Activated naive CD8-positive, alpha-beta T cell treated with anti-CD3 and anti-CD28 coated beads, Interleukin-2, amount 10 ng/mL, durations not matched to agents 7 days and 5 days (primary cell): ENCODE measurements at regions of chr5 and their contacts with region 1.

Region 1: GRCh38 chr5:154038707-154039457 is at the starts of genes FAM114A2 and MFAP3:
- DNase-seq: peak; percentile 87
- ATAC-seq: peak; percentile 99
- H3K4me3 Mint-ChIP-seq: peak within 1 kb of the TSS; percentile 92
- H3K27ac Mint-ChIP-seq: peak within 1 kb of the TSS; percentile 96
- H3K4me1 Mint-ChIP-seq: peaks cover 36% of the 10 kb centered on the region
- H3K27me3 Mint-ChIP-seq: no peaks in the 10 kb centered on the region
- total RNA-seq, gene FAM114A2: 25.8 to 28.6 TPM
- total RNA-seq, gene MFAP3: 26.0 to 26.1 TPM

Region 2: GRCh38 chr5:154025951-154026350 is 12.9 kb before region 1 on chr5:
- POLR2A ChIA-PET with region 1: no interaction called
- DNase-seq: no peak
- ATAC-seq: no peak
- H3K4me3 Mint-ChIP-seq: no peak overlapping the region
- H3K27ac Mint-ChIP-seq: no peak overlapping the region
- H3K4me1 Mint-ChIP-seq: no peaks in the 10 kb centered on the region
- H3K27me3 Mint-ChIP-seq: no peaks in the 10 kb centered on the region

Region 3: GRCh38 chr5:154058055-154059038 is 19.5 kb after region 1 on chr5:
- POLR2A ChIA-PET with region 1: interaction called, 13 read pairs
- DNase-seq: no peak
- ATAC-seq: peak; percentile 47
- H3K4me3 Mint-ChIP-seq: peak overlapping the region; percentile 9
- H3K27ac Mint-ChIP-seq: peak overlapping the region; percentile 52
- H3K4me1 Mint-ChIP-seq: peaks cover 14% of the 10 kb centered on the region
- H3K27me3 Mint-ChIP-seq: no peaks in the 10 kb centered on the region

Region 4: DNA sequence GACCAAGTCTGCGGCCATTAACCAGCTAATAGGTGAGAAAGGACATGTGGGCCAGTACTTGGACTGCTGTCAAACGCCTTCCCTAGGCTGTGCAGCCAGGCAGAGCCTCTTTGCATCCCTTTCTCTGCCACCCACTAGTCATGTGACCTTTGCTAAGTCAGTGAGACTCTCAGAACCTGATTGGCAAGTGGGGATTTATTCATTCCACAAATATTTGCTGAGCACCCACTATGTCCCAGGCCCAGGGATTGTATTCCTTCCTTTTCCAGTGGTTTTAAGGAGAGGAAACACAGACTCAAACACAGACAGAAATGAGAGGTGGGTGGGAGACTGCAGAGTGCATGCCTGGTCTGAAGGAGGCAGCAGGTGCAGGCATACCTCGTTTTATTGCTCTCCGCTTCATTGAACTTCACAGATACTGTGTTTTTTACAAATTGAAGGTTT is 80.0 kb after region 1 on chr5:
- POLR2A ChIA-PET with region 1: no interaction called
- DNase-seq: no peak
- ATAC-seq: no peak
- H3K4me3 Mint-ChIP-seq: no peak overlapping the region
- H3K27ac Mint-ChIP-seq: no peak overlapping the region
- H3K4me1 Mint-ChIP-seq: peaks cover 1% of the 10 kb centered on the region
- H3K27me3 Mint-ChIP-seq: peaks cover 2% of the 10 kb centered on the region